WTC11 (cell line): ENCODE measurements at regions of chr5 and their contacts with region 1.

Region 1: GRCh38 chr5:149317281-149318048 is 27.8 kb upstream of the GRPEL2 start:
- DNase-seq: no peak
- ATAC-seq: peak; percentile 52
- H3K4me3 Mint-ChIP-seq: no peak overlapping the region
- H3K27ac Mint-ChIP-seq: no peak overlapping the region; the same call in 1 of the 2 replicates
- H3K4me1 Mint-ChIP-seq: peaks cover 16% of the 10 kb centered on the region
- H3K27me3 Mint-ChIP-seq: no peaks in the 10 kb centered on the region; the same call in 1 of the 2 replicates
- CTCF ChIP-seq: 0 out of 2 replicates have a peak, but pooled peaks have one; percentile 24

Region 2: GRCh38 chr5:149345147-149345875 is 27.8 kb after region 1 on chr5 and contains the start of gene GRPEL2:
- CTCF ChIA-PET with region 1: interaction called, 15 read pairs
- POLR2A ChIA-PET with region 1: no interaction called
- DNase-seq: peak; percentile 94
- ATAC-seq: peak; percentile 97
- H3K4me3 Mint-ChIP-seq: peak within 1 kb of the TSS; percentile 89
- H3K27ac Mint-ChIP-seq: peak within 1 kb of the TSS; percentile 90
- H3K4me1 Mint-ChIP-seq: peaks cover 20% of the 10 kb centered on the region
- H3K27me3 Mint-ChIP-seq: peaks cover 13% of the 10 kb centered on the region
- CTCF ChIP-seq: no peak
- total RNA-seq, gene GRPEL2: 35.3 to 48.6 TPM (median 35.5 TPM) in 3 replicates

Region 3: GRCh38 chr5:149576021-149576420 is 258.6 kb after region 1 on chr5:
- CTCF ChIA-PET with region 1: no interaction called
- POLR2A ChIA-PET with region 1: no interaction called
- DNase-seq: no peak
- ATAC-seq: no peak
- H3K4me3 Mint-ChIP-seq: no peak overlapping the region
- H3K27ac Mint-ChIP-seq: no peak overlapping the region
- H3K4me1 Mint-ChIP-seq: peaks cover 7% of the 10 kb centered on the region
- H3K27me3 Mint-ChIP-seq: peaks cover 25% of the 10 kb centered on the region
- CTCF ChIP-seq: no peak